GM12878 (cell line): ENCODE measurements at regions of chrX and their contacts with region 1.

Region 1: DNA sequence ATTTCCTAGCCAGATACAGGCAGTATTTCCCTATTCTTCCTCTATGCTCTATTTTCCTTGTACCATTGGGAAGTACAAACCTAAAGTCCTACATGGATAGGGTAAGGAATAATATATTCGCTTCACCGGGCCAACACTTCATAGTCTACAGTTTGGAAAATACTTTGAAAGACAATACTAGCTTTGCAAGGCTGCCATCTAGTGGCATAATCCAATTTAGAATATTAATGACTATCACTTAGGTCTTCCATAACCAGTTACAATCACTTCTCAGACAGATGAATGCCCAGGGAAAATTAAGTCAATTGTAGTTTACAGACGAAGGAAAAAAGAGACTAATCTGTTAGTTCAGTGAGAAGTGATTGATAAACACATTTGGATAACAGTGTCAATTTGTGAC is 141.0 kb upstream of the FAM47C start:
- DNase-seq: no peak
- ATAC-seq: peak; percentile 76
- H3K4me3 ChIP-seq: no peak overlapping the region
- H3K27ac ChIP-seq: no peak overlapping the region
- H3K4me1 ChIP-seq: no peaks in the 10 kb centered on the region
- H3K27me3 ChIP-seq: no peaks in the 10 kb centered on the region
- CTCF ChIP-seq: peak; percentile 37 to 62 (median 44); a peak in 5 of 6 replicates
- EP300 ChIP-seq: no peak
- POLR2A ChIP-seq: no peak
- RAD21 ChIP-seq: peak; percentile 63

Region 2: DNA sequence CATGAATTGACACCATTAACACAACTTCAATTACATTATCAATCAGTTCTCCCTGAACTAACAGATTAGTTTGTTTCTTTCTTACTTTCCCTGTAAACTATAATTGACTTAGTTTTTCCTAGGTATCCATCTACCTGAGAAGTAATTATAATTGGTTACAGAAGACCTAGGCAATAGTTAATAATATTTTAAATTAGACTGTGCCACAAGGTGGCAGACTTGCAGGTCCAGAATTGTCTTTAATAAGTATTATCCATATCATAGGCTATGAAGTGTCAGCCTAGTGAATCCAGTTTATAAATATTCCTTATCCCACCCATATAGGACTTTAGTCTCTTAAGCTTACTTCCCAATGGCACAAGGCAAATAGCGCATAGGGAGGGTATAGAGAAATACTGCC is 1973.4 kb before region 1 on chrX:
- CTCF ChIA-PET with region 1: no interaction called
- POLR2A ChIA-PET with region 1: no interaction called
- RAD21 ChIA-PET with region 1: no interaction called
- SMC1A ChIA-PET with region 1: no interaction called
- in situ Hi-C with region 1: no loop called
- intact Hi-C with region 1: loop called (anchors 10 kb)
- DNase-seq: no peak
- ATAC-seq: peak; percentile 55; the same call in 1 of the 3 replicates
- H3K4me3 ChIP-seq: no peak overlapping the region
- H3K27ac ChIP-seq: no peak overlapping the region
- H3K4me1 ChIP-seq: no peaks in the 10 kb centered on the region
- H3K27me3 ChIP-seq: no peaks in the 10 kb centered on the region
- CTCF ChIP-seq: peak in 1 of 3 experiments; percentile 22; a peak in 2 of 6 replicates
- EP300 ChIP-seq: no peak
- POLR2A ChIP-seq: no peak
- RAD21 ChIP-seq: no peak

Region 3: GRCh38 chrX:35890699-35891098 is 976.4 kb before region 1 on chrX:
- CTCF ChIA-PET with region 1: interaction called, 3 read pairs
- POLR2A ChIA-PET with region 1: no interaction called
- RAD21 ChIA-PET with region 1: no interaction called
- SMC1A ChIA-PET with region 1: interaction called, 3 read pairs
- in situ Hi-C with region 1: no loop called
- intact Hi-C with region 1: loop called (anchors 2 kb)
- DNase-seq: no peak
- ATAC-seq: peak; percentile 83
- H3K4me3 ChIP-seq: no peak overlapping the region
- H3K27ac ChIP-seq: no peak overlapping the region
- H3K4me1 ChIP-seq: no peaks in the 10 kb centered on the region
- H3K27me3 ChIP-seq: no peaks in the 10 kb centered on the region
- CTCF ChIP-seq: peak; percentile 47 to 55 (median 50); a peak in 5 of 6 replicates
- EP300 ChIP-seq: no peak
- POLR2A ChIP-seq: no peak
- RAD21 ChIP-seq: peak; percentile 72

Region 4: DNA sequence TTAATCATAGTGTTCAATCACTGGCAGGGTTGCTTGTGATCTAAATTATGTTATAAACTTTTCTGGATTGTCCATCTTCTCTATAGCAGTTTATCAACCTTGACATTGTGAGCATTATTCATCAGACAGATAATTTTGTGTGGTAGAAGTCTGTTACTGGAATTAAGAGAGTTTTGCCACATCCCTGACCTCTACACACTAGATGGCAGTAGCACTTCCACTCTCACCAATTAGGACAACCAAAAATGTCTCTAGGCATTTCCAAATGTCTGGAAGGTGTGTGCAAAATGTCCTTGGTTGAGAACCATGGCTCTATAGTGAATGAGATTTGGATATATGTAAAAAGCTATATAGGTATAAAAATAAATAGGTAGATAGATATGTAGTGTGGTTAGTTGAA is 183.1 kb before region 1 on chrX:
- CTCF ChIA-PET with region 1: interaction called, 3 read pairs
- POLR2A ChIA-PET with region 1: no interaction called
- RAD21 ChIA-PET with region 1: no interaction called
- SMC1A ChIA-PET with region 1: no interaction called
- in situ Hi-C with region 1: no loop called
- intact Hi-C with region 1: loop called (anchors 2 kb)
- DNase-seq: no peak
- ATAC-seq: no peak
- H3K4me3 ChIP-seq: no peak overlapping the region
- H3K27ac ChIP-seq: no peak overlapping the region
- H3K4me1 ChIP-seq: no peaks in the 10 kb centered on the region
- H3K27me3 ChIP-seq: no peaks in the 10 kb centered on the region
- CTCF ChIP-seq: 0 out of 6 replicates have a peak, but pooled peaks of 2 of the 3 experiments have one; percentile 1 to 3
- EP300 ChIP-seq: no peak
- POLR2A ChIP-seq: no peak
- RAD21 ChIP-seq: no peak

Region 5: GRCh38 chrX:37383313-37383712 is 516.2 kb after region 1 on chrX:
- CTCF ChIA-PET with region 1: no interaction called
- POLR2A ChIA-PET with region 1: no interaction called
- RAD21 ChIA-PET with region 1: no interaction called
- SMC1A ChIA-PET with region 1: no interaction called
- in situ Hi-C with region 1: no loop called
- intact Hi-C with region 1: no loop called
- DNase-seq: no peak
- ATAC-seq: no peak
- H3K4me3 ChIP-seq: no peak overlapping the region
- H3K27ac ChIP-seq: no peak overlapping the region
- H3K4me1 ChIP-seq: no peaks in the 10 kb centered on the region
- H3K27me3 ChIP-seq: no peaks in the 10 kb centered on the region
- CTCF ChIP-seq: no peak
- EP300 ChIP-seq: no peak
- POLR2A ChIP-seq: no peak
- RAD21 ChIP-seq: no peak